Heart right ventricle (tissue), 16 donors: ENCODE measurements at regions of chr21 and their contacts with region 1.

Region 1: DNA sequence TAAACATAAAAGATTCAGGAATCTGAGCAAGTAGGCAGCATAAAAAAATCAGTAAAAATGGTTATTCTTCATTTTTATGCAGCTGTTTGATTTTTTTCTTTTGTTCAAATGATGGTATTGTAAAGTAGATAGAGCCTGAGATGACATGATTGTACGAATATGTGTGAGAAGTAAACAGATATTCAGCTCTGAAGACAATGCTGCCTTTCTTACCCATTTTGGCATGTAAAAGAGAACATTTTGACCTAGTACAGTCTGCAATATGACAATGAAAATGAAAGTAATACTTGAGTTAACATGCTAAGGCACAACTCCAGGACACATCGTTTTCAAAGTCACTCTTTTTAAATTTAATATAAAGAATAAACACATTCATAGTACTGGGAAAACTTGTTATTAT is 95.7 kb upstream of the NCAM2 start:
- DNase-seq: no peak
- ATAC-seq: peak in 1 of 8 donors; percentile 58
- H3K4me3 ChIP-seq: no peak overlapping the region
- H3K27ac ChIP-seq: no peak overlapping the region
- H3K4me1 ChIP-seq: no peaks in the 10 kb centered on the region
- H3K27me3 ChIP-seq: no peaks in the 10 kb centered on the region
- CTCF ChIP-seq: no peak

Region 2: GRCh38 chr21:20404915-20405314 is 497.6 kb before region 1 on chr21:
- intact Hi-C with region 1: no loop called
- DNase-seq: no peak
- ATAC-seq: no peak
- H3K4me3 ChIP-seq: no peak overlapping the region
- H3K27ac ChIP-seq: no peak overlapping the region
- H3K4me1 ChIP-seq: no peaks in the 10 kb centered on the region
- H3K27me3 ChIP-seq: no peaks in the 10 kb centered on the region
- CTCF ChIP-seq: no peak

Region 3: GRCh38 chr21:20822666-20823065 is 79.8 kb before region 1 on chr21:
- intact Hi-C with region 1: loop called in 1 of 10 experiments (anchors 1 kb)
- DNase-seq: no peak
- ATAC-seq: no peak
- H3K4me3 ChIP-seq: no peak overlapping the region
- H3K27ac ChIP-seq: no peak overlapping the region
- H3K4me1 ChIP-seq: no peaks in the 10 kb centered on the region
- H3K27me3 ChIP-seq: no peaks in the 10 kb centered on the region
- CTCF ChIP-seq: no peak

Region 4: GRCh38 chr21:21076491-21076890 is 174.0 kb after region 1 on chr21:
- intact Hi-C with region 1: no loop called
- DNase-seq: no peak
- ATAC-seq: no peak
- H3K4me3 ChIP-seq: no peak overlapping the region
- H3K27ac ChIP-seq: no peak overlapping the region
- H3K4me1 ChIP-seq: no peaks in the 10 kb centered on the region
- H3K27me3 ChIP-seq: no peaks in the 10 kb centered on the region
- CTCF ChIP-seq: no peak